Psoas muscle (tissue), 8 donors: ENCODE measurements at regions of chr11 and their contacts with region 1.

Region 1: DNA sequence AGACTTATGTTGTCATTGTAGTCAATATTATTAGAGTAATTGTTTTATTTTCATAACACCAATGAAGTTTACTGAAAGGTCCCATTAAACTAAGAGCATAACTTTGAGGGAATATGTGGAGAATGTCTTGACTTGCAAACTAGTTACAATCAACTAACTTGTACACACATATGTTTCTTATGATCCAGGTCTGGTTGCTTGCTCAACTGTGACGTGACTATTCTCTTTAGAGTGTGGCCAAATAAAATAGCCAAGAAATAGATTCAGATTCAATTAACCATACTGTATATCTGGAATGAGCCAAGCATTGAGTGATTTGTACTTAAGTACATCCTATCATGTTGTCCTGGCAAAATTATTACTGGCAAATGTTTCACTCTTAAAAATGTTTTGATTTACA is 101.7 kb downstream of the METTL15 start:
- DNase-seq: no peak
- ATAC-seq: no peak
- H3K4me3 ChIP-seq: no peak overlapping the region
- H3K27ac ChIP-seq: no peak overlapping the region
- H3K4me1 ChIP-seq: no peaks in the 10 kb centered on the region
- H3K27me3 ChIP-seq: no peaks in the 10 kb centered on the region
- CTCF ChIP-seq: no peak

Region 2: DNA sequence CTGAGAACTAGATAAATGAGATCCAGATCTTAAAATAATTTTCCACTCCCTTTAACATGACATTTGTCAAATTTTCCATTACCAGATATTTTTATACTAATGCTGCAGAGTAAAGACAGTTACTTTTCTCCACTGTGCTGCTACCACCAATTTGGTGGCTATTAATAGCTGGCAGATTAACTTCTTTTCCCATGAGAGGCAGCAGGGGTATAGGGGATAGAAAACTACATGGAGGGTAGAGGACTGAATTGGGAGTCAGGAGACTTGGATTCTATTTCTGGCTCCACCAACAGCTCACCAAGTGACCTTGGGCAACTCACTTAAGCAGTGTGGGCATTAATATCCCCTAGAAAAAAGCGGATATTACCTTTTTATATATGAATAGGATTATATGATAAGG is 171.1 kb before region 1 on chr11:
- intact Hi-C with region 1: no loop called
- DNase-seq: no peak
- ATAC-seq: no peak
- H3K4me3 ChIP-seq: no peak overlapping the region
- H3K27ac ChIP-seq: no peak overlapping the region
- H3K4me1 ChIP-seq: no peaks in the 10 kb centered on the region
- H3K27me3 ChIP-seq: no peaks in the 10 kb centered on the region
- CTCF ChIP-seq: no peak

Region 3: DNA sequence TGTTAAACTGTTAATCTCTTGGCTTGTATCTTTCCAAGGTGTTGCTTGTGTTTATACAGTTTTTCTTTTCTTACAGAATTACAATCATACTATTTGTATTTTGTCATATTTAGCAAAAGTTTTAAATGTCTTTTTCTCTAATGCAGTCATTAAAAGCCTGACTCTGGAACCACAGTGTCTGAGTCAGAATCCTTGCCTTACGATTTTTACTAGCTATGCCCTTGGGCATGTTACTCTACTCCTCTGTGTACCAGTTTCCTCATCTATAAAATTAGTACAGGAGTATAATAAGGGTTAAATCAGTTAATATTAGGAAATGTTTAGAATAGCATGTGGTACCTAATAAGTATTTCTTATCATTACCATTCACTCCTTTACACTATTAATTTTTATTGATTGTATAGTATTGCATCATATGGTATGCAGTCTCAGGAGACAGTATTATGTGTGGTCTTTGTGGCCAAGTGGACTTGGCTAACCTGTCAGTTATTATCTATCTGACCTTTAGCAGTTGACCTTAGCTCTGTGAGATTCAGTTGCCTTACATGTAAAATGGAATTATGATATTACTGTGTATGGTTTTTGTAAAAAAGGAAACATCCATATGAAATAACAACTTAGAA is 33.6 kb before region 1 on chr11:
- intact Hi-C with region 1: loop called in 1 of 2 experiments (anchors 1 kb)
- DNase-seq: no peak
- ATAC-seq: no peak
- H3K4me3 ChIP-seq: no peak overlapping the region
- H3K27ac ChIP-seq: no peak overlapping the region
- H3K4me1 ChIP-seq: no peaks in the 10 kb centered on the region
- H3K27me3 ChIP-seq: no peaks in the 10 kb centered on the region
- CTCF ChIP-seq: no peak

Region 4: GRCh38 chr11:28259177-28259843 is 49.4 kb after region 1 on chr11:
- intact Hi-C with region 1: no loop called
- DNase-seq: no peak
- ATAC-seq: no peak
- H3K4me3 ChIP-seq: no peak overlapping the region
- H3K27ac ChIP-seq: no peak overlapping the region
- H3K4me1 ChIP-seq: no peaks in the 10 kb centered on the region
- H3K27me3 ChIP-seq: no peaks in the 10 kb centered on the region
- CTCF ChIP-seq: no peak